ENCODE measurements at regions of chr12 and their contacts with region 1.

Region 1: GRCh38 chr12:22544038-22544979 is at the start of gene C2CD5:
- DNase-seq: peak; percentile 78
- H3K4me3 ChIP-seq: peak within 1 kb of the TSS; percentile 92
- CTCF ChIP-seq: peak; percentile 54

Region 2: DNA sequence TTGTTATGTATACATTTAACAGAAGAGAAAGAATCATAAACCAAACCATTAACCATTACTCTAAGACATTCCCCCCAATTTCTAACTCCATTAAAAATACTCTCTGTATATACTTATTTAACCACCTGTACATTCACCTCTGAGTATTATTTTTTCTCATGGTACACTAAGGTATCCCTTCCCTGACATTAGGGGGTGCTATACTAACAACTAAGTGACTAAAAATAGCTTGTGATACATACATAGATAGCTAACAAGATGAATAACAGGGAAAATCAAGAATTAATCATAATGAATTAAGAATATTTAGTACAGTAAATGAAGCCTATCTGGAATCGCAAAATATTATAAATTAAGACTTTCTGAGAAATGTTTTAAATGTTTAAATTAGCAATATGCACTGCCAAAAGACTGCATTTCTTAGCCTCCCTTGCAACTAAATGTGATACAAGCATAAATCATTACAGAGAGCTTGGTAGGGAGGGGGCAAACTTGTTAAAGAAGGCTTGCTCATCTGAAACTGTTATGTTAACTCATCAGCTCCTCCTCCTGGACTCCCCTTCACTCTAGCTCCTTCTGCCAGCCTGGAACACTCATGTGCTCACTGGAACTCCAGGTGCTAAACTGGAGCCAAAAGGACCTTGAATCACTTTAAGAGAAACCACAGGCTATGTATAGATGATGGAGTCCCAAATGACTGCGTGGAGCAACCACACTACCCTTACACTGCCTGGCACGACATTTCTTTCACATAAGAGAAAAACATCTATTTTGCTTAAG is 14.8 kb before region 1 on chr12:
- CTCF ChIA-PET with region 1: interaction called, 21 read pairs
- POLR2A ChIA-PET with region 1: interaction called, 3 read pairs
- DNase-seq: no peak
- H3K4me3 ChIP-seq: no peak overlapping the region
- CTCF ChIP-seq: peak; percentile 19

Region 3: DNA sequence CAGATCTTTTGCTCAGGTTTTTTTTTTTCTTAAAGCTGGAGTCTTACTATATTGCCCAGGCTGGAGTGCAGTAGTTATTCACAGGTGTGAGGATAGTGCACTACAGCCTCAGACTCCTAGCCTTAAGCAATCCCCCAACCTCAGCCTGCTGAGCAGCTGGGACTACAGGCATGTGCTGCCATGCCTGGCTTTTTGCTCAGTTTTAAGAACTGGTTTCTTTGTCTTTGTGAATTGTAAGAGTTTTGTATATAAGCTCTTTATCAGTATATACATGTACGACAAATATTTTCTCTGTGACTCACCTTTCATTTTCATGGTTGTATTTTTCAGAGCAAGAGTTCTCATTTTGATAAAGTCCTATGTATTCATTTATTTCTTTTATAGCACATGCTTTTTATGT is 33.4 kb after region 1 on chr12:
- CTCF ChIA-PET with region 1: no interaction called
- POLR2A ChIA-PET with region 1: no interaction called
- DNase-seq: no peak
- H3K4me3 ChIP-seq: no peak overlapping the region
- CTCF ChIP-seq: no peak

Region 4: DNA sequence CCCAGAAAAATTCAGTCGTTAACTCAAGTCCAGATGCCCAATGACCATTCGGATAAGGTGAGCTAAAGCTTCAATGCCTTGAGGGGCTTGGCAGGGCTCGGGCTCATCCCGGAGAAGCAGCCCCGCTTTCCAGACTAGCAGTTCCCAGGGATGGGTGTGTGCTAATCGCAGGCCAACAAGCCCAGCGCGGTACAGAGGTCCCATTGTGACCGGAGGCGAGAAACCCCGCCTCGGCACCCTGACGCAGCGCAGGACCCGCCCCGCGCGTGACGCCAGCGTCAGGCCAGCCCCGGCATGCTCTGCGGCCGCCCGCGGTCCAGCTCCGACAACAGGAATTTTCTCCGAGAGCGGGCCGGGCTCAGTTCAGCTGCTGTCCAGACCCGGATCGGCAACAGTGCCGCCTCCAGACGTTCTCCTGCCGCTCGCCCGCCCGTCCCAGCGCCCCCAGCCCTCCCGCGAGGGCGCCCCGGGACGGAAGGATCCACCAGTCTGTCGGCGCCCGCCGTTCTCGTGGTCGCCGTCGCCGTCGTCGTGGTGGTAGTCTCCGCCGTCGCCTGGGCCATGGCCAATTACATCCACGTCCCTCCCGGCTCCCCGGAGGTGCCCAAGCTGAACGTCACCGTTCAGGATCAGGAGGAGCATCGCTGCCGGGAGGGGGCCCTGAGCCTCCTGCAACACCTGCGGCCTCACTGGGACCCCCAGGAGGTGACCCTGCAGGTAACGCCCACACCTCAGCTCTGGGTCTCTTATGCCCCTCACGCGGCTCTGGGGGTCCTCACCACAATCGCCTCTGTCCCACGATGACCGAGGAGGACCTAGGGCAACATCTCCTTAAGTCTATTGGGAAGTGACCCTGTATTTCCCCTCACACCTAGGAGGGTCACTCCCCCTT is 80.8 kb after region 1 on chr12 and contains the start of gene ETNK1:
- CTCF ChIA-PET with region 1: interaction called, 3 read pairs
- POLR2A ChIA-PET with region 1: interaction called, 11 read pairs
- DNase-seq: peak; percentile 41
- H3K4me3 ChIP-seq: peak within 1 kb of the TSS; percentile 97
- CTCF ChIP-seq: no peak